ENCODE measurements at regions of chr11 and their contacts with region 1.

Region 1: DNA sequence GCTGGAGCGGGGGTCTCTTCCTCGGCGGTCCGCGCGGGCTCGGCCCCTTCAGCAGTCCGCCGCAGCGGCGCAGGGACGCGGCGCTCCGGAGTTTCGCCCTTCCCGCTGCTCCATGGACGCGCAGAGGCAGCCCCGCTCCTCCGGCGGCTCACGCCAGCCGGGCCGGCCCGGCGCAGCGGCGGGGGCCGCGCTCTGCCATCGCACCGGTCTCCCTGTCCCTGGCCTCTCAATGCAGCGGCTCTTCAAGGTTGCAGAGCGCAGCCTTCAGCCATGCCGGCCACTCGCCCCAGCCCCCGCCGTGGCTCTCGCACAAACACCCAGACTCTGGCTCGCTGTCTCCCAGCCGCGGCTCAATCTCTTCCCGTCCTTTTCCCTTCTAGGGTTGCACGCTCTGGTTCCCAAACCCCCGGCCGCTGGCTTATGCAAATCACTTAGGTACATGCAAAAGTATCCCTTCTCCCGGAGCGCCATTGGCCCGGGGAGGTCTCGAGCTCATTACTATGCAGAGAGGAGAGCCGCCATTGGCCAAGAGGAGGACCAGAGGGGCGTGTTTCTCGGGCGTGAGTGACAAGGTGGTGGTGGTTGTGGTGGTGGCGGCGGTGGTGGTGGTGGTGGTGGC is at the start of gene LGR4:
- DNase-seq: peak; percentile 97 to 98
- H3K4me3 ChIP-seq: peak within 1 kb of the TSS; percentile 67
- H3K4me3 Mint-ChIP-seq: peak within 1 kb of the TSS; percentile 87
- H3K27ac Mint-ChIP-seq: peak within 1 kb of the TSS; percentile 88
- H3K4me1 ChIP-seq: peaks cover 31% of the 10 kb centered on the region
- H3K4me1 Mint-ChIP-seq: peaks cover 6% of the 10 kb centered on the region
- H3K27me3 ChIP-seq: no peaks in the 10 kb centered on the region
- H3K27me3 Mint-ChIP-seq: no peaks in the 10 kb centered on the region
- CTCF ChIP-seq: no peak
- total RNA-seq, gene LGR4: 34.7 and 37.1 TPM in 2 replicates

Region 2: DNA sequence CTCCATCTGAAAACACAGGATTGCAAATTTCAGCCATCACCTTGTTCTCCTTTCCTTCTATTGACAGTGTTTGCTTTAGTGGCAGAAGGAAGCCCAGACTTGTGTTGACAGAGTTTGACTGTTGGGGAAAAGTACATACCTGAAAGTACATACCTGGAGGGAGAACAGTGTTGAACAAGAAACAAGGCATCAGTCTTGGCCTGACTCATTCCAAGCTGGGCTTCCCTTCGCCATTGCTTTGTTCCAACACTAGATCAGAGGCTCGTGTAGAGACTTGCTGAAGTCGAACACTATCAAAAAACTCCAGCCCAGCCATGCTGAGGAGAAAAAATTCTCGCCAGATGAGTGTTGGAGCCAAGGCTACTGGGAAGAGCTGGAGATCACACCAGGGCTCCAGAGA is 298.5 kb before region 1 on chr11:
- CTCF ChIA-PET with region 1: no interaction called
- POLR2A ChIA-PET with region 1: no interaction called
- intact Hi-C with region 1: loop called (anchors 5 kb)
- DNase-seq: peak; percentile 55 to 60
- H3K4me3 ChIP-seq: no peak overlapping the region
- H3K4me3 Mint-ChIP-seq: peak overlapping the region; percentile 31
- H3K27ac Mint-ChIP-seq: no peak overlapping the region
- H3K4me1 ChIP-seq: peaks cover 20% of the 10 kb centered on the region
- H3K4me1 Mint-ChIP-seq: peaks cover 25% of the 10 kb centered on the region
- H3K27me3 ChIP-seq: no peaks in the 10 kb centered on the region
- H3K27me3 Mint-ChIP-seq: peaks cover 4% of the 10 kb centered on the region
- CTCF ChIP-seq: no peak

Region 3: DNA sequence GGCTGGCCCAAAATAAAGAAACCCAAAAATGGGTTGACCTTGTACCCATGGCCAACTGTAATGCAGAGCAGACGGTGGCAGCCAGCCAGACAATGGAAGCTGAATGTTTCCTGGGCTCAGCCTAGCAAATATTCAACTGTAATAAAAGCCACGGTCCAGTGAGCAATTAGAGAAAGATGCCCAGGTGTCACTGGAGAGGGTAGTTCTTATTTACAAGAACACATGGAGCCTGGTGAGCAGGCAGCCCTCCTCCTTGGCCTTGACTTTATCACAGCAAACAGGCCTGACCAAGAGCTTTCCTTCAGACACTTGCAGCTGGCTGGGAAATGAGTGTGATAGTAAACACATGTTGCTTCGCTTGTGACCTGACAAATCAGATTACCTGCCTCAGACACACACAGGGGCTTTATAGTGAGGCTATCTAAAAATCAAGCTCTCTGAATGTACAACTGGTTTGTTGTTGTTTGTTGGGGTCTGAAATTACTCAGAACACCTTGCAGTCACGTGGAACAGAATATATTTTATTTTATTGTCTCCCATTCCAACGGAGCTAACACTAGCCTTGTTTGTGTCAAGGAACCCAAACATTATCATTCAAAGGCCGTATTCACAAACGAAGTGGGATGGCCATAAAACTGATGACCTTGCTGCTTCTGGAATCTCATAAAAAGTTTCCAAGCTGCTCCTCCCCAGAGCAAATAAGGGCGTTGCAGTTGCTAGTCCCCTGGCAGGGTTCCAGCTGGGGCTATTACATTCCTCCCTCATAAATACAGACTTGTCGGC is 270.9 kb before region 1 on chr11:
- CTCF ChIA-PET with region 1: interaction called, 5 read pairs
- POLR2A ChIA-PET with region 1: interaction called, 9 read pairs
- intact Hi-C with region 1: loop called (anchors 5 kb)
- DNase-seq: peak; percentile 89 to 94
- H3K4me3 ChIP-seq: no peak overlapping the region
- H3K4me3 Mint-ChIP-seq: peak overlapping the region; percentile 63
- H3K27ac Mint-ChIP-seq: peak overlapping the region; percentile 87
- H3K4me1 ChIP-seq: peaks cover 42% of the 10 kb centered on the region
- H3K4me1 Mint-ChIP-seq: peaks cover 48% of the 10 kb centered on the region
- H3K27me3 ChIP-seq: no peaks in the 10 kb centered on the region
- H3K27me3 Mint-ChIP-seq: no peaks in the 10 kb centered on the region
- CTCF ChIP-seq: no peak

Region 4: DNA sequence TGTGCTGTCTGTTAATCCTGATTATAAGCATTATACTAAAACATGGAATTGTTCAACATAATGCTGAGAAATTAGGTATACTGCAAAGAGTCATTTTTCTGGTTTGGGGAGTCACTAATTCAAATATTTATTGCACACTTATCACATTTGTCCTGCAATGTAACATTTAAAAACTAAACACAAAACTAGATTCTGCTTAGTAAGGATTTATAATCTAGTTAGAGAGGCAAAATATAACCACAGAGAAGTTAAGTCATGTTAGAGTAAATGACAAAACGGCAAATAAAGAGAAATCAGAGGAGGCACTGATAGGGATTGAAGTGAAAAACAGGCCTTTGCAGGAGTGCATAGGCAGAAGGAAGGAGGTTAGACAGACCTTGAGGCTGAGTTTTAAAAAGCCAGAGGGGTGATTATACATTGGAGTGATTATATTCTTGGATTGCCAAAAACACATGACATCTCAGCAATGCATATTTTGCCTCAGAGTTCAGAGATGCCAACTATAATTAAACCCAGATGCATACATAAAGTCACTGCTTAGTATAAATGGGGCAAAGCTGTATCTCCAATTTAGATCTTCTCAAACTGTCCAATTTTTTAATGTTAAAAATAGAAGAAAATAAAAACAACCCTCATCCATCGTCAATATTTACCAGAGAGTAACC is 159.2 kb before region 1 on chr11:
- CTCF ChIA-PET with region 1: no interaction called
- POLR2A ChIA-PET with region 1: no interaction called
- intact Hi-C with region 1: loop called (anchors 5 kb)
- DNase-seq: no peak
- H3K4me3 ChIP-seq: no peak overlapping the region
- H3K4me3 Mint-ChIP-seq: no peak overlapping the region
- H3K27ac Mint-ChIP-seq: no peak overlapping the region
- H3K4me1 ChIP-seq: peaks cover 9% of the 10 kb centered on the region; the same call in 1 of the 2 replicates
- H3K4me1 Mint-ChIP-seq: peaks cover 10% of the 10 kb centered on the region
- H3K27me3 ChIP-seq: no peaks in the 10 kb centered on the region
- H3K27me3 Mint-ChIP-seq: no peaks in the 10 kb centered on the region
- CTCF ChIP-seq: no peak

Region 5: DNA sequence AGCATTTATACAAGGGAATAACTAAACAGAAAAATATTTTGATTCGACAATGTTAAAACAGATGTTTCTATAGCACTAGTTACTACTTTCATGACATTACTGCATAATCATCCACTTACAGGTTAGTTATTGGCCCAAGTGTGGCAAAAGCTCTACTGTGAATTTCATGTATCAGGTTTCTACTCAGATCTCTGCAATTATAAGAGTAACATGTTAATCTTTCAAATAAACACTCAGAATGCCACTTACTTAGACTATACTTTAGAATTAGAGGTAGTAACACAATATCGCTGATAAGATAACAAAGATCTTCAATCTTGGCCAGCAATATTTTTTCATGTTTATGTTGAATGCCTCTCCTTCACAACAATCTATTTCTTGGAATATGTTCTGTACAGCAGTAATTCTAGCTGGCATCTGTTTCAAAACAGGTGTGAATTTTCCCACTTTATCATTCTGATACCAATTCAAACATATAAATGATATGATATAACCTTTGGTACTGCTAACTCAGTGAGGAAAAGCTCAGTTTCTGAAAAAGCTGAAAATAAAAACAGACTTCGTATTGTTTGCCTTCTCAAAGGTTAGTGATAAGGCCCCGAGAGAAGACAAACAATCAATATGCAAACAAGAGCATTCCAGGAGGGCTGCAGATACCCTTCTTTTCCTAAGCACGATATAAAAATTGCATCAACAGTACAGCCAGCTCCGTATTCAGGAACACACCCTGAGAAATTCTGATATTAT is 98.5 kb before region 1 on chr11:
- CTCF ChIA-PET with region 1: interaction called, 14 read pairs
- POLR2A ChIA-PET with region 1: no interaction called
- intact Hi-C with region 1: no loop called
- DNase-seq: peak in 1 of 2 experiments; percentile 51
- H3K4me3 ChIP-seq: no peak overlapping the region
- H3K4me3 Mint-ChIP-seq: peak overlapping the region; percentile 42
- H3K27ac Mint-ChIP-seq: peak overlapping the region; percentile 69
- H3K4me1 ChIP-seq: peaks cover 34% of the 10 kb centered on the region
- H3K4me1 Mint-ChIP-seq: peaks cover 39% of the 10 kb centered on the region
- H3K27me3 ChIP-seq: no peaks in the 10 kb centered on the region
- H3K27me3 Mint-ChIP-seq: no peaks in the 10 kb centered on the region
- CTCF ChIP-seq: no peak

Region 6: DNA sequence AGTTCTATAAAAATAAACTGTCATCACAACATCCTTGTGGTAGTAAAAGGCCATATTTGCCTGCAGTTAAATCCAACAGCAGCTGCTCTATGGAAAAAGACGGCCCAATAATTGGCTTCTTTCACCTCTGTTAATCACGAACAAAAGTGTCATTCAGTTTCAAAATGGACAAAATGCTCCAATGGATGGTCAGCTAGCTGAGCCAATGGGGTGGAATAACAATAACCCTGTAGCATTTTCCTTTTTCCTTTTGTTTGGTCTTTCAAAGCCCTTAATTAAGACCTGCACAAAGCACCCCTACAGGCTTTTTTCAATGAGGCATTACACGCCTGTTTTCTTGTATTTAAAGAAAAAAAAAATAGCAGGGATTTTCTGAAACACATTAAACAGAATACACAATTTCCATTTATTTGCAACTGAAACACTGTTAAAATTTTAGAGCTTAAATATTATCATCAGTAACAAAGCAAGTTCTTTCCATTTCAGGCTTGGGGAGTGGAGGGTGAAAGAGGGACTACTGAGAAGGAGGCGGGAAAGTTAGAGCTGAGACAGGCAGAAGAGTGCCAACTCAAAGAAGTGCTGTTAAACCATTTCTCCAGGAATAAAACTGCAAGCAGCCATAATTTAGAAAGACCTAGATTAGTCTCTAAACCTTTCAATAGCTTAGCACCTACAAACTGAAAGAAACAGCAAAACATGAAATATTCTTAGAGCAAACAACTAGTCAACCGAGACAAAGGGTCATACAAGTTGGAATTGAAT is 28.6 kb before region 1 on chr11:
- CTCF ChIA-PET with region 1: no interaction called
- POLR2A ChIA-PET with region 1: interaction called, 10 read pairs
- intact Hi-C with region 1: no loop called
- DNase-seq: no peak
- H3K4me3 ChIP-seq: no peak overlapping the region
- H3K4me3 Mint-ChIP-seq: no peak overlapping the region
- H3K27ac Mint-ChIP-seq: no peak overlapping the region
- H3K4me1 ChIP-seq: no peaks in the 10 kb centered on the region
- H3K4me1 Mint-ChIP-seq: peaks cover 12% of the 10 kb centered on the region
- H3K27me3 ChIP-seq: no peaks in the 10 kb centered on the region
- H3K27me3 Mint-ChIP-seq: no peaks in the 10 kb centered on the region
- CTCF ChIP-seq: no peak

Region 7: GRCh38 chr11:27485930-27486773 is 13.6 kb after region 1 on chr11:
- CTCF ChIA-PET with region 1: interaction called, 14 read pairs
- POLR2A ChIA-PET with region 1: interaction called, 3 read pairs
- intact Hi-C with region 1: no loop called
- DNase-seq: peak in 1 of 2 experiments; percentile 67
- H3K4me3 ChIP-seq: no peak overlapping the region
- H3K4me3 Mint-ChIP-seq: no peak overlapping the region
- H3K27ac Mint-ChIP-seq: no peak overlapping the region
- H3K4me1 ChIP-seq: no peaks in the 10 kb centered on the region
- H3K4me1 Mint-ChIP-seq: no peaks in the 10 kb centered on the region
- H3K27me3 ChIP-seq: no peaks in the 10 kb centered on the region
- H3K27me3 Mint-ChIP-seq: no peaks in the 10 kb centered on the region
- CTCF ChIP-seq: peak; percentile 87 to 92

Region 8: GRCh38 chr11:27621405-27622161 is 149.1 kb after region 1 on chr11:
- CTCF ChIA-PET with region 1: no interaction called
- POLR2A ChIA-PET with region 1: no interaction called
- intact Hi-C with region 1: no loop called
- DNase-seq: no peak
- H3K4me3 ChIP-seq: no peak overlapping the region
- H3K4me3 Mint-ChIP-seq: no peak overlapping the region
- H3K27ac Mint-ChIP-seq: no peak overlapping the region
- H3K4me1 ChIP-seq: no peaks in the 10 kb centered on the region
- H3K4me1 Mint-ChIP-seq: peaks cover 8% of the 10 kb centered on the region
- H3K27me3 ChIP-seq: no peaks in the 10 kb centered on the region
- H3K27me3 Mint-ChIP-seq: peaks cover 6% of the 10 kb centered on the region
- CTCF ChIP-seq: no peak

Region 9: DNA sequence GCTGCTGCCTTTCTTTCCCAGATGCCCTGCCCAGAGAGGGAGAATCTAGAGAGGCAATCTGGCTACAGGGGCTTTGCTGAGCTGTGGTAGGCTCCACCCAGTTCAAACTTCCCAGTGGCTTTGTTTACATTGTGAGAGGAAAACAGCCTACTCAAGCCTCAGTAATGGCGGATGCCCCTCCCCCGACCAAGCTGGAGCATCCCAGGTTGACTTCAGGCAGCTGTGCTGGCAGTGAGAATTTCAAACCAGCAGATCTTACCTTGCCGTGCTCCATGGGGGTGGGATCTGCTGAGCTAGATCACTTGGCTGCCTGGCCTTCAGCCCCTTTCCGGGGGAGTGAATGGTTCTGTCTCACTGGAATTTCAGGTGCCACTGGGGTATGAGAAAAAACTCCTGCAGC is 215.6 kb after region 1 on chr11:
- CTCF ChIA-PET with region 1: no interaction called
- POLR2A ChIA-PET with region 1: no interaction called
- intact Hi-C with region 1: no loop called
- DNase-seq: no peak
- H3K4me3 ChIP-seq: no peak overlapping the region
- H3K4me3 Mint-ChIP-seq: no peak overlapping the region
- H3K27ac Mint-ChIP-seq: no peak overlapping the region
- H3K4me1 ChIP-seq: no peaks in the 10 kb centered on the region
- H3K4me1 Mint-ChIP-seq: no peaks in the 10 kb centered on the region
- H3K27me3 ChIP-seq: no peaks in the 10 kb centered on the region
- H3K27me3 Mint-ChIP-seq: no peaks in the 10 kb centered on the region
- CTCF ChIP-seq: no peak